ENCODE measurements at regions of chr13 and their contacts with region 1.

Region 1: DNA sequence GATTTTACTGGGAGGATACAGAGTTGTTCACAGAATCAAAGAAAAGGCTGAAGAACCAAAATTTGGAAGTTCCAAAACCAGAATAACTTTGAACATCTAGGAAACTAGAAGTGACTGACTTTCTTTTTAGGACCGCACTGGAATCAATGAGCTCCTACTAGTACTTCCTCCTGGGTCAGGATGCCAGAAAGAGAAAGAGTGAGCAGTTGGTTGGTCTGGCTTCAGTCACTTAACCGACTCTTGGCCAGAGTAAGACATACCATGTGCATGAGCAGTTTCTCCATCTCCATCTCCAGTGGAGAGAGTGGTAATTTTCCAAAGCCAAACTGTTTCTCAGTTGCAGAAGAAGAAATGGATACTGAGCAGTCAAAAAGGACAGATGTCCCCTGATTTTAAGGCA is 27.1 kb upstream of the MTUS2 start:
- DNase-seq: no peak
- H3K4me3 ChIP-seq: no peak overlapping the region
- H3K27ac ChIP-seq: no peak overlapping the region
- H3K4me1 ChIP-seq: peaks cover 0 to 14% (median 6%) of the 10 kb centered on the region in 4 donors
- H3K27me3 ChIP-seq: no peaks in the 10 kb centered on the region
- CTCF ChIP-seq: no peak
- EP300 ChIP-seq: no peak
- POLR2A ChIP-seq: no peak

Region 2: GRCh38 chr13:28324181-28324789 is 468.7 kb before region 1 on chr13:
- intact Hi-C with region 1: loop called (anchors 2 kb)
- DNase-seq: no peak
- H3K4me3 ChIP-seq: no peak overlapping the region
- H3K27ac ChIP-seq: no peak overlapping the region
- H3K4me1 ChIP-seq: peaks cover 0 to 10% (median 4%) of the 10 kb centered on the region in 4 donors
- H3K27me3 ChIP-seq: no peaks in the 10 kb centered on the region
- CTCF ChIP-seq: peak in 3 of 4 experiments; percentile 30 to 60 (median 41)
- EP300 ChIP-seq: no peak
- POLR2A ChIP-seq: no peak

Region 3: DNA sequence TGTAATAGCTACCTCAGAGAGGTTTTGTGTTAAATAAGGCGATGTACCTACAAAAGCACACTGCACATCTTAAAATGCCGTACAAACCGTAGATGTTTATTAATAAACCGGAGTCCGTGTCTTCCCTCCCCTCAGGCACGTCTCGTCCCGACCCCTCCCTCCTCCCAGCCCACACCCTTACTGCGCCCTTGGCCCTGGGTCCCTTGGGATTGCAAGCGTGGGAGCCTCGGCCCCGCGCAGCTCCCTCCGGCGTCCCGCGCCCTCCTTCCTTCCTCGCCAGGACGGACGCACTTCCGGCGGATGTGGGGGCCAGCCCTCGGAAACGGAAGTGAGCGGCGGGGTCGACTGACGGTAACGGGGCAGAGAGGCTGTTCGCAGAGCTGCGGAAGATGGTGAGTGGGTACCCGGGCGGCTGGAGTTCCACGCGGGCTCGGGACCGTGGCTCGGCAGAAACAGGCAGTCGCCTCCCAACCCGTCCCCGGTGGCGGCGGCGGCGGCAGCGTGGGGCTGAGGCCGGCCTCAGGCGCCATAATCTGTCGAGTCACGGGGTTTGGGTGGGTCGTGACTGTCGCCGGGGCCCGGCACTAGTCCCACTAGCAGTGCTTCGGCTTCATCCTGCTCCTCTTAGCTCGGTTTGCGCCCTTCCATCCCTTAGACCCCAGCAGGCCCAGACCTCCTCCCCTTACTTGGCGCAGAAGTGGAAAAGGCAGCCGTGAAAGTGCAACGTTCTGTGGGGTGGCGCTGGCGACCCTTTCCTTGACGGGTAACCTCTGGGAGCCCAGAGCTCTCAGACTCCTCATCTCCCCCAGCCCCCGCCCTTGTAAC is 134.0 kb before region 1 on chr13 and contains the start of gene POMP:
- intact Hi-C with region 1: loop called (anchors 10 kb)
- DNase-seq: peak; percentile 96
- H3K4me3 ChIP-seq: peak within 1 kb of the TSS; percentile 61 to 92 (median 75)
- H3K27ac ChIP-seq: peak within 1 kb of the TSS; percentile 86 to 96 (median 90)
- H3K4me1 ChIP-seq: peaks cover 0 to 52% (median 46%) of the 10 kb centered on the region in 4 donors
- H3K27me3 ChIP-seq: no peaks in the 10 kb centered on the region
- CTCF ChIP-seq: no peak
- EP300 ChIP-seq: peak in 2 of 4 donors; percentile 73 to 75
- POLR2A ChIP-seq: peak; percentile 95 to 98
- total RNA-seq, gene POMP: 38.6 to 96.4 (median 66.7) TPM

Region 4: DNA sequence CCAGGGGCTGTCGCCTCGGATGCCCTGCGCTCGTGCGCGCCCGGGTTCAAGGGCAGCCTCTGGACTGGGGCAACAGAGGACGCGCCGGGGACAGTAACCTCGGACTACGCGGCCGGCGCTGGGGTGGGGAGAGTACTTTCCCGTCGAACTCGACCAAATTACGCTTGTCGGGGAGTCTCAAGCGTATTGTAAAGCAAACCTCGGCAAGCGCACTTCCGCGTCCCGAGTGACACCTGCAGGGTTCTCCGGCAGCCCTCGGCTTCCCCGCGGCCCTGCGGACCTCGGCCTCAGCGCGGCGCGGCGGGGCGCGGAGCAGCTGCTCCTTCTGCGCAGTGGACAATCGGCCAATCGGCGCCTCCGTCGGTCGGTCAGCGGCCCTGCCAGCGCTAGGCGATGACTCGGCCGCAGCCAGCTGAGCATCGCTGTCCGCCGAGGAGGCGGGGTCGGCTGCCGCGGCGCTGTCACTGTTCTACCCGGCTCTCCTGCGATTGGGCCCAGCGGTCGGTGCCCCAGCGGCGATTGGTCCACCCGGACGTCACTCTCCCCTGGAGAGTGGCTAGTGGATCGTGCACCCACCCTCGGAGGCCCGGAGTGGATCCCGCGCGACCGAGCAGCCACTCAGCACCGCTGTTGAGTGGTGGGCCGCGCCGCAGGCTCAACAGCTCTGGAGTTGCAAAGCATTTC is 74.3 kb before region 1 on chr13 and contains the start of gene SLC46A3:
- intact Hi-C with region 1: loop called (anchors 2 kb)
- DNase-seq: peak; percentile 99
- H3K4me3 ChIP-seq: peak within 1 kb of the TSS; percentile 67 to 75 (median 74)
- H3K27ac ChIP-seq: peak within 1 kb of the TSS; percentile 90 to 98 (median 93)
- H3K4me1 ChIP-seq: peaks cover 0 to 21% (median 16%) of the 10 kb centered on the region in 4 donors
- H3K27me3 ChIP-seq: no peaks in the 10 kb centered on the region
- CTCF ChIP-seq: no peak
- EP300 ChIP-seq: no peak
- POLR2A ChIP-seq: peak; percentile 21 to 47
- total RNA-seq, gene SLC46A3: 14.1 to 18.2 (median 15.1) TPM